Heart right ventricle (tissue), 16 donors: ENCODE measurements at regions of chr11 and their contacts with region 1.

Region 1: GRCh38 chr11:86706321-86706720 is 33.9 kb upstream of the ME3 start:
- DNase-seq: no peak
- ATAC-seq: no peak
- H3K4me3 ChIP-seq: no peak overlapping the region
- H3K27ac ChIP-seq: no peak overlapping the region
- H3K4me1 ChIP-seq: no peaks in the 10 kb centered on the region
- H3K27me3 ChIP-seq: no peaks in the 10 kb centered on the region
- CTCF ChIP-seq: no peak

Region 2: GRCh38 chr11:86608251-86608799 is 98.0 kb before region 1 on chr11:
- intact Hi-C with region 1: no loop called
- DNase-seq: peak; percentile 68 to 73
- ATAC-seq: peak; percentile 72 to 90 (median 86)
- H3K4me3 ChIP-seq: peak overlapping the region in 4 of 10 donors; percentile 4 to 22 (median 15)
- H3K27ac ChIP-seq: peak overlapping the region in 2 of 10 donors; percentile 13 to 15
- H3K4me1 ChIP-seq: peaks cover 6 to 41% (median 26%) of the 10 kb centered on the region in 9 donors
- H3K27me3 ChIP-seq: no peaks in the 10 kb centered on the region
- CTCF ChIP-seq: peak; percentile 84 to 98 (median 94)

Region 3: GRCh38 chr11:86719781-86720463 is 13.6 kb after region 1 on chr11:
- intact Hi-C with region 1: no loop called
- DNase-seq: no peak
- ATAC-seq: no peak
- H3K4me3 ChIP-seq: no peak overlapping the region
- H3K27ac ChIP-seq: no peak overlapping the region
- H3K4me1 ChIP-seq: peaks cover 0 to 4% (median 0%) of the 10 kb centered on the region in 9 donors
- H3K27me3 ChIP-seq: no peaks in the 10 kb centered on the region
- CTCF ChIP-seq: no peak

Region 4: DNA sequence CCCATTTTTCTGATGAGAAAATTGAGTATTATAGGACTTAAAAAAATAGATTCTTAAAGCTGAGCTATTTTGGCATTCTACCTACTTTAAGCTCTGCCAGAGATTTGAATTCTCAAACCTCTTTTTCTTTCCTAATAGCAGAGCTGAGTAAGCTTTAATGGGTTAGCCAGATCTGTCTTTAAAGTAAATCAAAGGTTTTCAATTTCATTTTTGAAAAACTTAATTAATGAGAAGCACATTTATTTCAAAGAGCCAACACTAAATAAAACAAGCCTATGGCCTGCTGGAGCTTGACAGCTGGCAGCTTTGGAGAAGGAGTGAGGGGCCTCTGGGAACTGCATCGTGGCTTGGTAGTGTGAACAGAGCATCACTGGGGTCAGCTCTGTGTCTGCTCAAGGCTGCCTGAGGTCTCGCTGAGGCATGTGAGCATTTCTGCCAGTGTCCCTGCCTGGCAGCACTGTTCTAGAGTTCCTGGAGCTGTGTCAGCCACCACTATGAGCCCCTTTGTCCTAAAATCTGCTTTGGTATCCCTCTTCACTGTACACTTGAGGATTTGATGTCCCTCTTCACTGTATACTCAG is 43.6 kb after region 1 on chr11:
- intact Hi-C with region 1: no loop called
- DNase-seq: no peak
- ATAC-seq: no peak
- H3K4me3 ChIP-seq: no peak overlapping the region
- H3K27ac ChIP-seq: no peak overlapping the region
- H3K4me1 ChIP-seq: no peaks in the 10 kb centered on the region
- H3K27me3 ChIP-seq: no peaks in the 10 kb centered on the region
- CTCF ChIP-seq: no peak

Region 5: GRCh38 chr11:87265132-87265531 is 558.8 kb after region 1 on chr11:
- intact Hi-C with region 1: loop called in 1 of 10 experiments (anchors 10 kb)
- DNase-seq: no peak
- ATAC-seq: no peak
- H3K4me3 ChIP-seq: no peak overlapping the region
- H3K27ac ChIP-seq: no peak overlapping the region
- H3K4me1 ChIP-seq: peaks cover 0 to 21% (median 8%) of the 10 kb centered on the region in 9 donors
- H3K27me3 ChIP-seq: no peaks in the 10 kb centered on the region
- CTCF ChIP-seq: no peak

Region 6: GRCh38 chr11:87597725-87598124 is 891.4 kb after region 1 on chr11:
- intact Hi-C with region 1: no loop called
- DNase-seq: no peak
- ATAC-seq: no peak
- H3K4me3 ChIP-seq: no peak overlapping the region
- H3K27ac ChIP-seq: no peak overlapping the region
- H3K4me1 ChIP-seq: no peaks in the 10 kb centered on the region
- H3K27me3 ChIP-seq: no peaks in the 10 kb centered on the region
- CTCF ChIP-seq: no peak